HepG2 (cell line): ENCODE measurements at regions of chr1 and their contacts with region 1.

Region 1: DNA sequence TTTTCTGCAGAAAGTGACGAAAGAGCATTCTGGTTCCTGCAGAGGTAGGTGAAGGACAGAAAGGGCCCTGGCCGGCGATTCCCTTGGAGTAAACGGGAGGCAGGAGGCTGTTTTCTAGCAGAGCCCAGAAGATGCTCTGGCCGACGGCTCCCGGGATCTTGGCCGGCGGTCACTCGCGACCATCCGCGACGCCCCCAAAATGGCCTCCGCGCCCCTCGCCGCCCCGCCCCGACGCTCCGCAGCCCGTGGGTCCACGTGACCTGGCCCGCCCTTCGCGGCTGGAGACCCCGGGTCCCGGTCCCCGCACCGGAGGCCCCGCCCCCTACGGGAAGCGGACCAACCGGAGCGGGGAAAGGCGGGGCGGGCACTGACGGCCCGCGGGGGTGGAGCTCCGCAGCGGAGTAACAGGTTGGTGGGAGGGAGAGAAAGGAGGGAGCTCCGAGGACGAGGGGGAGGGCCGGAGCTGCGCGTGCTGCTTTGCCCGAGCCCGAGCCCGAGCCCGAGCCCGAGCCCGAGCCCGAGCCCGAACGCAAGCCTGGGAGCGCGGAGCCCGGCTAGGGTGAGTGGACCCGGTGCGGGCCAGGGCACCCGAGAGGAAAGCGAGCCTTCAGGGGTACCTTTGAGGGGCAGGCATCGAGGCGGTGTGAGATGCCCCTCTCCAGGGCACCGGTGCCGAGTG is at the start of gene CGN:
- DNase-seq: peak; percentile 73
- ATAC-seq: peak; percentile 82
- H3K4me3 ChIP-seq: peak within 1 kb of the TSS; percentile 66 to 80 (median 71)
- H3K27ac ChIP-seq: no peak within 1 kb of the TSS
- H3K4me1 ChIP-seq: peaks cover 66% of the 10 kb centered on the region
- H3K27me3 ChIP-seq: peaks cover 0 to 16% of the 10 kb centered on the region in 2 experiments; a peak in 2 of 5 replicates
- CTCF ChIP-seq: no peak
- EP300 ChIP-seq: no peak
- POLR2A ChIP-seq: no peak
- RAD21 ChIP-seq: no peak
- total RNA-seq, gene CGN: 0.24 and 0.75 TPM in 2 replicates

Region 2: DNA sequence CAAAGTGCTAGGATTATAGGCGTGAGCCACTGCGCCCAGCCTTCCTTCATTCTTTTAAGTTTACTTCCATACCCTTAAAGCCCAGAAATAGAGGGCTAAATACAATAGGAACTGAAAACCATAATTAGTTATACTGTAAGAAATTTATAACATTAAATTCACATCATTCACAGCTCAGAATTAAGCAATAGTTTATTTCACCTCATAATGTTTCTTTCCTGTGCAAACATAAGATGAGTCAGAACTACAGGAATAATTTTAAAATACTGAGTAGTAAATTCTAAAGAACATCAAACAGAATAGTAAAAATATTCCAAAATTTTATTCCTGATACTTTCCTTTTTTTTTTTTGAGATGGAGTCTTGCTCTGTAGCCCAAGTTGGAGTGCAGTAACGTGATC is 75.9 kb before region 1 on chr1:
- CTCF ChIA-PET with region 1: no interaction called
- POLR2A ChIA-PET with region 1: no interaction called
- in situ Hi-C with region 1: no loop called
- intact Hi-C with region 1: no loop called
- DNase-seq: no peak
- ATAC-seq: no peak
- H3K4me3 ChIP-seq: no peak overlapping the region
- H3K27ac ChIP-seq: no peak overlapping the region
- H3K4me1 ChIP-seq: peaks cover 5% of the 10 kb centered on the region
- H3K27me3 ChIP-seq: no peaks in the 10 kb centered on the region
- CTCF ChIP-seq: no peak
- EP300 ChIP-seq: no peak
- POLR2A ChIP-seq: no peak
- RAD21 ChIP-seq: no peak

Region 3: GRCh38 chr1:151494741-151495281 is 16.3 kb before region 1 on chr1:
- CTCF ChIA-PET with region 1: no interaction called
- POLR2A ChIA-PET with region 1: interaction called, 11 read pairs
- in situ Hi-C with region 1: no loop called
- intact Hi-C with region 1: no loop called
- DNase-seq: peak; percentile 33
- ATAC-seq: peak; percentile 44; the same call in 2 of the 3 replicates
- H3K4me3 ChIP-seq: no peak overlapping the region
- H3K27ac ChIP-seq: no peak overlapping the region
- H3K4me1 ChIP-seq: peaks cover 28% of the 10 kb centered on the region
- H3K27me3 ChIP-seq: no peaks in the 10 kb centered on the region
- CTCF ChIP-seq: no peak
- EP300 ChIP-seq: no peak
- POLR2A ChIP-seq: no peak
- RAD21 ChIP-seq: no peak

Region 4: GRCh38 chr1:151526735-151527525 is 15.8 kb after region 1 on chr1:
- CTCF ChIA-PET with region 1: no interaction called
- POLR2A ChIA-PET with region 1: no interaction called
- in situ Hi-C with region 1: no loop called
- intact Hi-C with region 1: no loop called
- DNase-seq: no peak
- ATAC-seq: no peak
- H3K4me3 ChIP-seq: no peak overlapping the region
- H3K27ac ChIP-seq: no peak overlapping the region
- H3K4me1 ChIP-seq: no peaks in the 10 kb centered on the region
- H3K27me3 ChIP-seq: no peaks in the 10 kb centered on the region
- CTCF ChIP-seq: no peak
- EP300 ChIP-seq: no peak
- POLR2A ChIP-seq: no peak
- RAD21 ChIP-seq: no peak

Region 5: DNA sequence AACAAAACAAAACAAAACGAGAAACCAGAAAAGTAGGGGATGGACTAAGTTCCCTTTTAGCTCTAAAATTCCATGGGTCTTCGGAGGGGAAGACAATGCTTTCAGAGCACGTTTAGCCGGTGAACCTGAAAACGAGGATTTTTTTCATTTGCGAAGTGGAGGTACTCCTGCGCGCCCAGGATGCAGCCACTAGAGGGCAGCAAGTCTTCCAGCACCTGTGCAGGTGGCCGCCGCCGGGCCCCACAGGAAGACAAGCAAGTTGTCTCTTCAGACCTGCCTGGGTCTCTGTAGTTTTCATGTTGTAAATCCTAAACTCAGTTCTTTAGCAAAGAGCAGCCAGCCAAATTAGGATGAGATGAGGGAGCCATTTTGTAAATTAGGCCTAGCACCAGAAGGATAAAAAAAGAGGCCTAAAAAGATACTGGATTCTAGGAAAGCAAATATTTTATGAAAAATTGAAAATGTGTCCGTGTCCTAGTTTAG is 83.1 kb after region 1 on chr1:
- CTCF ChIA-PET with region 1: no interaction called
- POLR2A ChIA-PET with region 1: no interaction called
- in situ Hi-C with region 1: no loop called
- intact Hi-C with region 1: no loop called
- DNase-seq: peak; percentile 59
- ATAC-seq: peak; percentile 92
- H3K4me3 ChIP-seq: peak overlapping the region in 2 of 3 experiments; percentile 15 to 21; a peak in 2 of 6 replicates
- H3K27ac ChIP-seq: no peak overlapping the region
- H3K4me1 ChIP-seq: peaks cover 34% of the 10 kb centered on the region
- H3K27me3 ChIP-seq: peaks cover 0 to 3% of the 10 kb centered on the region in 2 experiments; a peak in 1 of 5 replicates
- CTCF ChIP-seq: peak; percentile 91
- EP300 ChIP-seq: no peak
- POLR2A ChIP-seq: no peak
- RAD21 ChIP-seq: peak; percentile 80